ENCODE measurements at regions of chr6 and their contacts with region 1.

Region 1: GRCh38 chr6:53171605-53172446 is 23.2 kb upstream of the GCM1 start:
- DNase-seq: peak; percentile 78
- H3K4me3 Mint-ChIP-seq: no peak overlapping the region
- H3K27ac Mint-ChIP-seq: no peak overlapping the region
- H3K4me1 Mint-ChIP-seq: no peaks in the 10 kb centered on the region
- H3K27me3 Mint-ChIP-seq: no peaks in the 10 kb centered on the region

Region 2: GRCh38 chr6:53410508-53411258 is 238.9 kb after region 1 on chr6:
- intact Hi-C with region 1: loop called (anchors 1 kb)
- DNase-seq: peak; percentile 29
- H3K4me3 Mint-ChIP-seq: no peak overlapping the region
- H3K27ac Mint-ChIP-seq: no peak overlapping the region
- H3K4me1 Mint-ChIP-seq: peaks cover 5% of the 10 kb centered on the region
- H3K27me3 Mint-ChIP-seq: peaks cover 6% of the 10 kb centered on the region

Region 3: GRCh38 chr6:53437557-53438202 is 265.9 kb after region 1 on chr6:
- intact Hi-C with region 1: loop called (anchors 1 kb)
- DNase-seq: no peak
- H3K4me3 Mint-ChIP-seq: no peak overlapping the region
- H3K27ac Mint-ChIP-seq: no peak overlapping the region
- H3K4me1 Mint-ChIP-seq: peaks cover 17% of the 10 kb centered on the region
- H3K27me3 Mint-ChIP-seq: peaks cover 3% of the 10 kb centered on the region

Region 4: GRCh38 chr6:53651764-53652401 is 480.1 kb after region 1 on chr6:
- intact Hi-C with region 1: loop called (anchors 5 kb)
- DNase-seq: peak; percentile 70
- H3K4me3 Mint-ChIP-seq: peak overlapping the region; percentile 86
- H3K27ac Mint-ChIP-seq: peak overlapping the region; percentile 86
- H3K4me1 Mint-ChIP-seq: peaks cover 30% of the 10 kb centered on the region
- H3K27me3 Mint-ChIP-seq: peaks cover 27% of the 10 kb centered on the region

Region 5: DNA sequence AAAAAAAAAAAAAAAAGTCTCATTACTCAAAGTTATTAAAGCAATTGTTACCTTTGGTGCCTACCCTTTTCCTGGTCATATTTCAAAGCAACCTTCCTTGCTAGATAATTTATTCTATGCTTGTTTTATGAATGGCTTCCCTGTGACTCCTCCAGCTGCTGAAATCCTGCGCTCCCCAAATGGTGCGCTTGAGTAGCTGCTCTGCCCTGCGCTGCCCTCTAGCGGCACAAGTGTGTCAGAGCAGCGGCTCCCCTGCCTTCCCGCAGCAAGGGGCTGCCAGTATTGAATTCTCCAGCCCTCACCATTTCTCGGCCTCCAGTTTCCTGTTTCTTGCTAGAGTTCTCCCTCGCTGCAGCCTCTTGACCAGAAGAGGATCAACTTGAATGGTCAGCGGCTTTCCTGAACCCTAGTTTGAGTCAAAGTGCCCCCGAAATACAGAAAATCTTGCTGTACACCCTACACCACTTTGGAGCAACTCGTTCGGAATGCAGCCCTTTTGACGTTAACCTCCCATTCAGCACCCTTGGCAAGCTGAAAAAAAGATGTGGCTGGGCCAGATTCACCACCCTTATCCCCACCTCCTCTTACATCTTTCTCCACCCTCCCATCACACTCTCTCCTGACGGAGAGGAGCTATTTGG is 554.1 kb after region 1 on chr6:
- intact Hi-C with region 1: loop called (anchors 5 kb)
- DNase-seq: peak; percentile 56
- H3K4me3 Mint-ChIP-seq: no peak overlapping the region
- H3K27ac Mint-ChIP-seq: no peak overlapping the region
- H3K4me1 Mint-ChIP-seq: peaks cover 6% of the 10 kb centered on the region
- H3K27me3 Mint-ChIP-seq: peaks cover 24% of the 10 kb centered on the region

Measured in activated T-helper 2 cell treated with anti-CD3 and anti-CD28 coated beads, Interferon-gamma antibody, Interleukin-2, Interleukin-4, amounts not matched to agents 10 μg/mL and 5 μg/mL and 100 μg/mL, durations not matched to agents 14 hours and 24 hours and 36 hours (primary cell).